ENCODE measurements at regions of chrX and their contacts with region 1.

Region 1: DNA sequence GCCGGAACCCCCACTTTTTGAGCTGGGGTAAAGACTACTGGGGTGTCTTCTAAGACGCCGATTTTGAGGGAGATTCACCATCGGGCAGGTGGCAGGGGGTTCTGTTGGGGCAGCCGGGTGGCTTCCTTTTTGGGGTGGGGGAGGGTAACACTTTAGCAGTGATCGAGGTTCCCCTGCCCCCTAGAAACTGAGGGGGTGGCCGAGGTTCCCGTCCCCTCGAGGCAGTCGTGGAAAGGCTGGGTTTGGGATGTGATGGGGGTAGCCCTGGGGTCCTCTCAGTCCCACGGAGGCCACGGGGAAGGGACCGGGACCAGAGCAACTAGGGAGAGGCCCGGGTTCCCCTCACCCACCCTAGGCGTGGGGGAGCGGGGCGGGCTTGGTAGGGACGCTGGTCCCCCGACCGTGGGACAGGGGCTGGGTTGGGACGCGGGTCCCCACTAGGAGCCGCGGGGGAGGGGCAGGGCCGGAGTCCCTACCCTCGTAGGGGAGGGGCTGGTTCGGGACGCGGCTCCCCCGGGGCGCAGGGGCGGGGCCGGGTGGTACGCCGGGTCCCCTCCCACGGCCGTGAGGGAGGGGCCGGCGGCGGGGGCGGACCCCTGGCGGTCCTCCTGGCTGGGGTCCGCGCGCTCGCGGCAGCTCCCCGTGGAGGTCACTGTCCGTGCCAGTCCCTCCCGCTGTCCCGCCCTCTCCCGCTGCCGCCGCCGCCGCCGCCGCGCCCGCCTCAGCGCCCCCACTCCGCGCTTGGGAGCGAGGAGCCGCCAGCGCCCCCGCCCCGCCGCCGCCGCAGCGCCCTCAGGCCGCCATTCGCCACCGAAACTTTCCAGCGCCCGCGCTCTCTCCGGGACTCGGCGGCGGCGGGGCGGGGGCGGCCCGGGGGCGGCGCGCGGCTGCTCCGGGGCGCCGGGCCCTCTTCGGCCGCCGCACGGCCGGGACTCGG is at the start of gene TBL1X:
- DNase-seq: peak; percentile 19
- ATAC-seq: peak; percentile 69
- H3K4me3 ChIP-seq: peak within 1 kb of the TSS; percentile 60
- H3K27ac ChIP-seq: peak within 1 kb of the TSS; percentile 86
- H3K4me1 ChIP-seq: peaks cover 3% of the 10 kb centered on the region; the same call in 1 of the 2 replicates
- H3K27me3 ChIP-seq: no peaks in the 10 kb centered on the region
- CTCF ChIP-seq: no peak
- POLR2A ChIP-seq: no peak
- RAD21 ChIP-seq: no peak
- total RNA-seq, gene TBL1X: 20.8 and 21.1 TPM in 2 replicates

Region 2: GRCh38 chrX:8815464-8816065 is 649.1 kb before region 1 on chrX:
- CTCF ChIA-PET with region 1: no interaction called
- POLR2A ChIA-PET with region 1: no interaction called
- dilution Hi-C with region 1: no loop called
- in situ Hi-C with region 1: no loop called
- intact Hi-C with region 1: loop called (anchors 5 kb)
- DNase-seq: peak; percentile 40
- ATAC-seq: peak; percentile 88
- H3K4me3 ChIP-seq: no peak overlapping the region
- H3K27ac ChIP-seq: no peak overlapping the region
- H3K4me1 ChIP-seq: no peaks in the 10 kb centered on the region
- H3K27me3 ChIP-seq: no peaks in the 10 kb centered on the region; the same call in 1 of the 2 replicates
- CTCF ChIP-seq: peak; percentile 67
- POLR2A ChIP-seq: no peak
- RAD21 ChIP-seq: peak; percentile 63

Region 3: GRCh38 chrX:8868906-8869305 is 595.8 kb before region 1 on chrX:
- CTCF ChIA-PET with region 1: no interaction called
- POLR2A ChIA-PET with region 1: no interaction called
- dilution Hi-C with region 1: no loop called
- in situ Hi-C with region 1: no loop called
- intact Hi-C with region 1: loop called (anchors 5 kb)
- DNase-seq: peak; percentile 46
- ATAC-seq: peak; percentile 74
- H3K4me3 ChIP-seq: no peak overlapping the region
- H3K27ac ChIP-seq: peak overlapping the region; percentile 81
- H3K4me1 ChIP-seq: peaks cover 6% of the 10 kb centered on the region
- H3K27me3 ChIP-seq: no peaks in the 10 kb centered on the region
- CTCF ChIP-seq: peak; percentile 48
- POLR2A ChIP-seq: no peak
- RAD21 ChIP-seq: peak; percentile 17

Region 4: GRCh38 chrX:8939344-8939743 is 525.4 kb before region 1 on chrX:
- CTCF ChIA-PET with region 1: no interaction called
- POLR2A ChIA-PET with region 1: no interaction called
- dilution Hi-C with region 1: no loop called
- in situ Hi-C with region 1: no loop called
- intact Hi-C with region 1: no loop called
- DNase-seq: no peak
- ATAC-seq: no peak
- H3K4me3 ChIP-seq: no peak overlapping the region
- H3K27ac ChIP-seq: no peak overlapping the region
- H3K4me1 ChIP-seq: no peaks in the 10 kb centered on the region
- H3K27me3 ChIP-seq: peaks cover 2% of the 10 kb centered on the region; the same call in 1 of the 2 replicates
- CTCF ChIP-seq: no peak
- POLR2A ChIP-seq: no peak
- RAD21 ChIP-seq: no peak

Region 5: DNA sequence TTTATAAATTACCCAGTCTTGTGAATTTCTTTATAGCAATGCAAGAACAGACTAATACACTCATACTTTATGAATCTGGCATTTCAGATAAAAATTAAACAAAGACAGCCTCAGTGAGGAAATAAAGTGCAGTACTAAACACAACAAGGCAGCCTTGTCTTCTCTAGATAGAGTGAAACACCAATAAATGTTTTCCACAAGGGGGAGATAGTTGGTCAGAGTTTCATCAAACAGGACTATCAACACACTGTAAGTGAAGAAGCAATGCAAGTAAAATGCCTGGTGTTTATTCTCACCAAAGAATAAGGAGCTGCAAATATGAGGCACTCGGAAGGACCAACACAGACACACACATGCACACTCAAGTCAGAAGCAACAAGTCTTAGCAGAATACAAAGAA is 493.6 kb before region 1 on chrX:
- CTCF ChIA-PET with region 1: no interaction called
- POLR2A ChIA-PET with region 1: no interaction called
- dilution Hi-C with region 1: no loop called
- in situ Hi-C with region 1: loop called (anchors 25 kb)
- intact Hi-C with region 1: loop called (anchors 1 kb)
- DNase-seq: peak; percentile 67
- ATAC-seq: peak; percentile 92
- H3K4me3 ChIP-seq: no peak overlapping the region
- H3K27ac ChIP-seq: no peak overlapping the region
- H3K4me1 ChIP-seq: no peaks in the 10 kb centered on the region
- H3K27me3 ChIP-seq: no peaks in the 10 kb centered on the region
- CTCF ChIP-seq: peak; percentile 51
- POLR2A ChIP-seq: no peak
- RAD21 ChIP-seq: peak; percentile 69

Region 6: GRCh38 chrX:9148621-9149385 is 315.9 kb before region 1 on chrX:
- CTCF ChIA-PET with region 1: no interaction called
- POLR2A ChIA-PET with region 1: no interaction called
- dilution Hi-C with region 1: no loop called
- in situ Hi-C with region 1: no loop called
- intact Hi-C with region 1: loop called (anchors 2 kb)
- DNase-seq: peak; percentile 71
- ATAC-seq: peak; percentile 91
- H3K4me3 ChIP-seq: no peak overlapping the region
- H3K27ac ChIP-seq: peak overlapping the region; percentile 96
- H3K4me1 ChIP-seq: peaks cover 11% of the 10 kb centered on the region
- H3K27me3 ChIP-seq: no peaks in the 10 kb centered on the region
- CTCF ChIP-seq: no peak
- POLR2A ChIP-seq: no peak
- RAD21 ChIP-seq: no peak

Region 7: DNA sequence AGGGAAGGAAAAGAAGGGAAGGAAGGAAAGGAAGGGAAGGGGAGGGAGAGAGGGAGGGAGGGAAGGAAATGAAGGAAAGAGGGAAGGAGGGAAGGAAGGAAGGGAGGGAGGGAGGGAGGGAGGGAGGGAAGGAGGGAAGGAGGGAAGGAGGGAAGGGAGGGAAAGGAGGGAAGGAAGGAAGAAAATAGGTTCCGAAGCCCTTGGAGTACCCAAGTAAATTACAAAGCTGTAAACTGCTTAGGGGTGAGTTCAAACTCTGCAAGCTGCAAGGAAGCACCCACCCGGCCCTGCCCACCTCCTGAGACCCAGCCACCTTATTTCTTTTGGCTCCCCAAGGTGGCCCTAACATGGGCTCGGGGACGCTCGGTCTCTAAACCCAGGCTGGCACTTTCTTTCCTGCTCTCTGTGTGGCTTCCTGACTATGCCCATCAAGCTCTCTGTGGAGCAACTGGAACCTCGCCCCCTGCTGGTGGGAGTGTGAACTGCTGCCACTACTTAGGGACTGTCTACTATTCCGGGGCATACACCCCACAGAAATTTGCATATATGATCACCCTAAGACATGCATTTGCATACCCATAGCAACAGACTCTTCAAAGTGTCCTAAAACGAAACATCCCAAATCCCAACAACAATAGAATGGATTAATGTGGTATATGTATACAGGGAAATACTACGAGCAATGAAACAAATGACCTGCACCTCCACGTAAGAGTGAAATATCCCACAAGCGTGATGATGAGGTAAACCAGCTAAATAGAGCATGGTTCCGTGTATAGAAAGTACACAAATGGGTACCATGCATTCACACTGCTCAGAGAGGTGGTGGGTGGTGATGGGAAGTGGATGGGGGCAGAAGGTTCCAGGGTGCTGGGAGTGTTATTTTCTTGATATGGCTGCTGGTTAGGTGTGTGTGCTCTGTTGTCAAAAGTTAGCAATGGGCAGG is 151.5 kb before region 1 on chrX:
- CTCF ChIA-PET with region 1: no interaction called
- POLR2A ChIA-PET with region 1: no interaction called
- dilution Hi-C with region 1: no loop called
- in situ Hi-C with region 1: no loop called
- intact Hi-C with region 1: no loop called
- DNase-seq: no peak
- ATAC-seq: no peak
- H3K4me3 ChIP-seq: no peak overlapping the region
- H3K27ac ChIP-seq: no peak overlapping the region
- H3K4me1 ChIP-seq: peaks cover 4% of the 10 kb centered on the region
- H3K27me3 ChIP-seq: no peaks in the 10 kb centered on the region
- CTCF ChIP-seq: peak; percentile 22
- POLR2A ChIP-seq: no peak
- RAD21 ChIP-seq: peak; percentile 6; the same call in 1 of the 2 replicates

Region 8: GRCh38 chrX:9341291-9342201 is 123.2 kb before region 1 on chrX:
- CTCF ChIA-PET with region 1: no interaction called
- POLR2A ChIA-PET with region 1: no interaction called
- dilution Hi-C with region 1: no loop called
- in situ Hi-C with region 1: no loop called
- intact Hi-C with region 1: loop called (anchors 1 kb)
- DNase-seq: peak; percentile 69
- ATAC-seq: peak; percentile 19
- H3K4me3 ChIP-seq: peak overlapping the region; percentile 9; the same call in 1 of the 2 replicates
- H3K27ac ChIP-seq: peak overlapping the region; percentile 97
- H3K4me1 ChIP-seq: peaks cover 10% of the 10 kb centered on the region
- H3K27me3 ChIP-seq: no peaks in the 10 kb centered on the region
- CTCF ChIP-seq: no peak
- POLR2A ChIP-seq: no peak
- RAD21 ChIP-seq: 0 out of 2 replicates have a peak, but pooled peaks have one; percentile 2

Region 9: DNA sequence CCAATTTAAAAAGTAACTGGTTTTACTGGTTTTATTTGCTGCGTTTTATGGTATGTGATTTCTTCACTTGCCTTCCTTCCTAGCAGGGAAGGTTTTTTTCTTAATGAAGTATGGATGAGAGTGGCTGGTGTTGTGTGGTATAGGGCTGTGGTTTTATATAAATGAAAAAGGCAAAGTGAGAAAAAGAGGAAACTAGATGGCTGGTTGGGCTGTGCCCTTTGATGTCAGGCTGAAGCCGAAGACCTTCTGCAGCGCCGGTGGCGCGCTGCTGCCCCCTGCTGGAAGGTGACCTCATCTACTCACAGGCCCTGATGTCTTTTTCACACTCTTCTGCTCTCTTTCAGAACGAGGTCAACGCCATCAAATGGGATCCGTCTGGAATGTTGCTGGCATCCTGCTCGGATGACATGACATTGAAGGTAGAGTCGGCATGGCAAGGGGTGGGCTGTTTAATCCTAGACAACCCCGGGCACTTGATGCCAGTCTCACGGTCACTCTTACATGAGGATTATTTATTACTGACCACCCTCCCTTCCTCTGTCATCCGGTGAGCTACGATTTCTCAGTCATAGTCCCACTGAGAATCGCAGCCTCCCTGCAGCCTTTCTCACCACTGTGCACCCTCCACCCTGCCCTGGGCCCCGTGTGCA is 244.3 kb after region 1 on chrX:
- CTCF ChIA-PET with region 1: no interaction called
- POLR2A ChIA-PET with region 1: no interaction called
- dilution Hi-C with region 1: no loop called
- in situ Hi-C with region 1: no loop called
- intact Hi-C with region 1: loop called (anchors 1 kb)
- DNase-seq: peak; percentile 55
- ATAC-seq: peak; percentile 91
- H3K4me3 ChIP-seq: no peak overlapping the region
- H3K27ac ChIP-seq: no peak overlapping the region
- H3K4me1 ChIP-seq: no peaks in the 10 kb centered on the region
- H3K27me3 ChIP-seq: no peaks in the 10 kb centered on the region
- CTCF ChIP-seq: peak; percentile 78
- POLR2A ChIP-seq: no peak
- RAD21 ChIP-seq: peak; percentile 84